CD4-positive, alpha-beta T cell (primary cell): ENCODE measurements at regions of chr5 and their contacts with region 1.

Region 1: DNA sequence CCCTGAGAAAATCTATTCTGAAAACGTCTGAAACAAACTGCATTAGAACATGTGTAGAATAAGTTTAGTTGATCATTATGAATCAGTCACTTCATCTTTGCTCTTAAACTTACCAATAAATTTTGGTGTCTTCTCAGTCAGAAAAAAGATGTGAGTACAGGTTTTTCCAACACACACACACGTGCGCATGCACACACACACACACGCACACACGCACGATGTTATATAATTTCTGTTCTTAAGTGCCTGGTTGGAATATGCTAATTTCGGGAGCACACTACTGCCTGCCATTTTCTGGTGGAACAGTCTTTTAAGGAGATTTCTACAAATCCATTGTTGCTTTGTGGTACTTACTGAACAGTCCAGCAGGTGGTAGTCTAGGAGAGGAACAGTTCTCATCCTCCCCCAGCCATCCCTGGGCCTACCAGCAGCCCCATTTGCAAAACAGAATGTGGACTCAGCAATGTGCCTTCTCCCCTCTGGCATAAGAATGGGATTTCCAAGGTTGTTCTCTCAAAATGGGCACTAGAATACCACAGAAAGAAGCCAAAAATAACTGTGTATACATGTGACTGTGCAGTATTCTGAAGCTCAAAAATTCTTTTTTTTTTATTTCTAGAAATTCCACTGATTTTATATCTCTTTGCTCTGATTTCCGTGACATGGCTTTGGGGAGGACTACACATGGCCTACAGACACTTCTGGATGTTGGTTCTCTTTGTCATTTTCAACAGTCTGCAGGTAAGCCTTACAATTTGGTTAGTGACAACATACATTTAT is 281.3 kb downstream of the ARRDC3 start:
- DNase-seq: peak; percentile 3 to 76 (median 25)
- ATAC-seq: peak; percentile 84
- H3K4me3 ChIP-seq: no peak overlapping the region
- H3K4me3 Mint-ChIP-seq: no peak overlapping the region
- H3K27ac ChIP-seq: no peak overlapping the region
- H3K27ac Mint-ChIP-seq: no peak overlapping the region
- H3K4me1 ChIP-seq: no peaks in the 10 kb centered on the region
- H3K4me1 Mint-ChIP-seq: no peaks in the 10 kb centered on the region
- H3K27me3 ChIP-seq: no peaks in the 10 kb centered on the region
- H3K27me3 Mint-ChIP-seq: no peaks in the 10 kb centered on the region
- CTCF ChIP-seq: peak; percentile 41

Region 2: GRCh38 chr5:90866333-90866732 is 235.5 kb before region 1 on chr5:
- CTCF ChIA-PET with region 1: no interaction called
- POLR2A ChIA-PET with region 1: no interaction called
- intact Hi-C with region 1: loop called in 1 of 2 experiments (anchors 5 kb)
- DNase-seq: peak in 3 of 14 experiments; percentile 35 to 46 (median 44)
- ATAC-seq: no peak
- H3K4me3 ChIP-seq: no peak overlapping the region
- H3K4me3 Mint-ChIP-seq: no peak overlapping the region
- H3K27ac ChIP-seq: no peak overlapping the region
- H3K27ac Mint-ChIP-seq: no peak overlapping the region
- H3K4me1 ChIP-seq: no peaks in the 10 kb centered on the region
- H3K4me1 Mint-ChIP-seq: peaks cover 7% of the 10 kb centered on the region
- H3K27me3 ChIP-seq: no peaks in the 10 kb centered on the region
- H3K27me3 Mint-ChIP-seq: peaks cover 12% of the 10 kb centered on the region
- CTCF ChIP-seq: peak; percentile 43